ENCODE measurements at regions of chr11 and their contacts with region 1.

Region 1: DNA sequence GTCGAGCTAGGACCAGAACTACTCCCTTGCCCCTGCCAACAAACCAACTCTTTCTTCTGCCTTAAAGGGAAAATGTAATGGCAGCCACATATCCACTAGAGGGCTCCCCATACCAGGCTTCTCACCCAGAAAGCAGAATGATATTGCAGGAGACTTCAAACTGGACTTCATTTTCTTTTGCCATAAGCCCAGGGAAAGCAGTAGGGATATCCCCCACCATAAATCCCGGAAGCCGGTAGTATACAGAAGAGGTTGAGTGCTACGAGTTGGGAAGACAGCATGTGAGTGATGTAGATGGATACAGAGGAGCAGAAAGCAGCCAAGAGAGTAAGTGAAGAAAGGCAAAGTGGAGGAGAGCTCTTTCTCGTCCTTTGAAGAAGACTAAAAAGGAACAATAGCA is 12.1 kb downstream of the PLAAT5 start:
- H3K4me3 Mint-ChIP-seq: no peak overlapping the region
- H3K27ac Mint-ChIP-seq: no peak overlapping the region
- H3K4me1 Mint-ChIP-seq: no peaks in the 10 kb centered on the region
- H3K27me3 Mint-ChIP-seq: peaks cover 17% of the 10 kb centered on the region

Region 2: GRCh38 chr11:63362196-63362793 is 116.6 kb before region 1 on chr11:
- intact Hi-C with region 1: no loop called
- H3K4me3 Mint-ChIP-seq: no peak overlapping the region
- H3K27ac Mint-ChIP-seq: no peak overlapping the region
- H3K4me1 Mint-ChIP-seq: no peaks in the 10 kb centered on the region
- H3K27me3 Mint-ChIP-seq: peaks cover 22% of the 10 kb centered on the region

Region 3: GRCh38 chr11:63508009-63508408 is 29.1 kb after region 1 on chr11:
- intact Hi-C with region 1: loop called (anchors 1 kb)
- H3K4me3 Mint-ChIP-seq: no peak overlapping the region
- H3K27ac Mint-ChIP-seq: no peak overlapping the region
- H3K4me1 Mint-ChIP-seq: peaks cover 60% of the 10 kb centered on the region
- H3K27me3 Mint-ChIP-seq: peaks cover 10% of the 10 kb centered on the region

Region 4: DNA sequence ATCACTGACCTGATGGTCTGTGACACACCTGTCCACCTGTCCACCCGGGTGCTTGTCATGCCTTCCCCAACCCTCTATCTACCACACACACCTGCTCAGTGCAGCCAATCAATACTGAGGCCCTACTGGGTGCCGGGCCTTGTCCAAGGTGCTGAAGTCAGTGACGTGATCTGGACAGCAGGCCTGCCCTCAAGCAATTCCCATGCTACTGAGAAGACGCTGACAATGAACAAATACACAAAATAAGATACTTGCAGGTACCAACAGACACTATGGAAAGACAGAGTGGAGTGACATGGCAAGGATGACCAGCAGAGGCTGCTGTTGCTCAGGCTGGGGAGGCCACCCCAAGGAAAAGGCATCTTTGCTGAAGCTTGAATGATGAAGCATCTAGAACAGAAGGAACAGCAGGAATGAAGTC is 114.1 kb after region 1 on chr11:
- intact Hi-C with region 1: loop called (anchors 5 kb)
- H3K4me3 Mint-ChIP-seq: no peak overlapping the region
- H3K27ac Mint-ChIP-seq: no peak overlapping the region
- H3K4me1 Mint-ChIP-seq: peaks cover 22% of the 10 kb centered on the region
- H3K27me3 Mint-ChIP-seq: peaks cover 18% of the 10 kb centered on the region

Region 5: DNA sequence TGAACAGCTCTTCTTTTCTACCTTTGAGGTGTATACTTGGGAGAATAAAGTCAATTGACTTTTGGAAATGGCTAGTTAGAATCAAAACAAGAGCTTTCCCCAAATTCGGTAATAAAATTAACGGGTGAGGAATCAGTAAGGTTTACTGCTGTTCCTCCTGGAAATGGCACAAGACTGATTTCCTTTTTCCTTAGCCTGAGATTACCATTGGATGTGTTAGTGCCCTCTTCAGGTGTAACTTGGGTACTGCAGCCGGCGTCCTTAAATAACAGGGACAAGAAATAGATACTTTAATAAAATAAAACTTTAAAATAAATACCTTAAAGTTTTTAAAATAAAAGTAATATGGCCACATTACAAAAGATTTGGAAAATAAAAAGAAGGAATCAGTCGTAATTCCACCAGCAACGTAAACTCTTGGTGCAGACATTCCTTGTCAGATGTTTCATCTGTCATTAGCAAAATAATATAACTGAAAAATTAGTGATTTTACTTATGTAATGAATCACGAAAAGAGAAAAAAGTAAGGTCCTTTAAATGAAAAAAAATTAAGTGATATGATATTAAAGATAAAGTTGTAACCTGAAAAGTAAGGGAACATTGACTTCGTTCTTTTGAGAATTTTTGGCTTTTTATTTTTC is 259.9 kb after region 1 on chr11:
- intact Hi-C with region 1: loop called (anchors 1 kb)
- H3K4me3 Mint-ChIP-seq: no peak overlapping the region
- H3K27ac Mint-ChIP-seq: no peak overlapping the region
- H3K4me1 Mint-ChIP-seq: peaks cover 20% of the 10 kb centered on the region
- H3K27me3 Mint-ChIP-seq: no peaks in the 10 kb centered on the region

Measured in dendritic cell treated with granulocyte-macrophage colony-stimulating factor and Interleukin-4, amounts not matched to agents 40 ng/mL and 50 ng/mL, for 4 days (primary cell).